ENCODE measurements at regions of chr1 and their contacts with region 1.

Region 1: DNA sequence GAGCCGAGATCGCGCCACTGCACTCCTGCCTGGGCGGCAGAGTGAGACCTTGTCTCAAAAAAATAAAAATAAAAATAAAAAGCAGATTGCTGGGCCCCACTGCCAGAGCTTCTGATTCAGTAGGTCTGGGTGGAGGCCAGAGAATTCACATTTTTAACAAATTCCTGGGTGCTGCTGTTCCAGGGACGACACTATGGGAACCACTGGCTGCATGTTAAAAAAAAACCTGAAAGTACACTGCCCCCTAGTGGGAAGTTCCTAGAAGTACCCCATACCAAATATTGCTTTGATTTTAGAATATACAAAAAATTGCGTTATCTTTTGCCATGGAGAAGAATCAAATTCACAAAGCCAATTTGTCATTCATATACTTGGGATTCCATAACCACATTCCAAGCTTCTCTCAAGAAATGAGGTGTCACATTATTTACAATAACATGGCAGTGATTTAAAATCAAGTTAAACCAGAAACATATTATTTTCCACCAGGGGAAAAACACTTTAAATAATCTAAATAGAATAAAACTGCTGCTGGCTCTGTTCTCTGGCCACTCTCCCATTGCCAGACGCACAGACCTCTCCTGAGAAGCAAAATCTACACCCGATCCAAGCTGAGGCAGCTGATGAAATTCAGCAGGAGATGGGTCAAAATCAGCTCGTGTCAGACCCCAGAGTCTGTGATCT is 27.4 kb downstream of the SYF2 start:
- DNase-seq: no peak
- H3K4me3 ChIP-seq: no peak overlapping the region
- H3K27me3 ChIP-seq: peaks cover 7% of the 10 kb centered on the region
- CTCF ChIP-seq: peak; percentile 70

Region 2: DNA sequence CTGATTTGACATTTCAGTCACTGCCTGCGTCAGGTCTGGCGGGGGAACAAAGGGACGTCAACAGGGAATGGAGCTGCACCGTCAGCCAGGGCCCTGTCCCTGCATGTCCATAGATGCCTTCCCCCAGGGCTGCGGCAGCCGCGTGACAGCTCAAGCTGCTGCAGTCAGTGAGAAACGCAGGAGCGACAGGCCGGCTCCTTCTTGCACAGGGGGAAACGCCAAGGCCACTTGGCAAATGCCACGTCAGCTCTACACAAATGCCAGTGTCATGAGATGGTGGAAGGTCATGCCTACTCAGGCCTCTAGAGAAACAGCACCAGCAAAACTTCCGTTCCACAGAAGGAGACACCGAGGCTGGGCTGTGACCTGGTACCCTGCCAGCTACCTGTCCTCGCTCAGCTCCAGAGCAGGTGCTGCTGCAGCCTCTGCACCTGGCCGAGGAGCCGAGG is 10.3 kb before region 1 on chr1:
- CTCF ChIA-PET with region 1: interaction called, 27 read pairs
- POLR2A ChIA-PET with region 1: no interaction called
- DNase-seq: no peak
- H3K4me3 ChIP-seq: no peak overlapping the region
- H3K27me3 ChIP-seq: peaks cover 17% of the 10 kb centered on the region
- CTCF ChIP-seq: no peak

Region 3: DNA sequence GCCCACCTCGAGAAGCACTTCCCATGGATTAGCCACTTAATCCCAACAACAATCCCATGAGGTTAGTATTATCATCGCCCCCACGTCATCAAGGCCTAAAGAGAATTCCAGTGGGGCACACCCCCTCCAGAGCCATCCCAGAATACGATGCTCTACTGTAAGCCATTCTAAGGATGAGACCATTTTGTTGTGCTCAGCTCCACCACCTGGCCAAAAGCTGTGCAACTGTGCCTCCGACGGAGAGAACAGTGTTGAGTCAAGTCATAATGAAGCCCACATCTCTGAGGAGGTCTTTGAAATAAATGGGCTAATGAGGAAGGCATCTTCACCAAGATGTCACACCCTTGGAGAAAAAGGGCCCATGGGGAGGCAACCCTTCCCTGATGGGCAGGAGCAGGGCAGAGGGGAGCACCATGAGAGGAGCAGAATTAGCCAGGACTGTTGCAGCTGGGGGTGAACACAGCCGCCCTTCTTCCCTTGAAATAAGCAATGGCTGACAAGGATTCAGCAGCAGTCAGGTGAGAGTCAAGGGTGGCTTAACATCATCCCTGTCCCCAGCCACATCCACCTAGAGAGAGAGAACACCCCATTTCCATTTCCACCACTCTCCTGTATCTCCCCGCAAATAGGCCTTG is 12.8 kb after region 1 on chr1:
- CTCF ChIA-PET with region 1: interaction called, 22 read pairs
- POLR2A ChIA-PET with region 1: no interaction called
- DNase-seq: no peak
- H3K4me3 ChIP-seq: no peak overlapping the region
- H3K27me3 ChIP-seq: no peaks in the 10 kb centered on the region
- CTCF ChIP-seq: no peak

Region 4: DNA sequence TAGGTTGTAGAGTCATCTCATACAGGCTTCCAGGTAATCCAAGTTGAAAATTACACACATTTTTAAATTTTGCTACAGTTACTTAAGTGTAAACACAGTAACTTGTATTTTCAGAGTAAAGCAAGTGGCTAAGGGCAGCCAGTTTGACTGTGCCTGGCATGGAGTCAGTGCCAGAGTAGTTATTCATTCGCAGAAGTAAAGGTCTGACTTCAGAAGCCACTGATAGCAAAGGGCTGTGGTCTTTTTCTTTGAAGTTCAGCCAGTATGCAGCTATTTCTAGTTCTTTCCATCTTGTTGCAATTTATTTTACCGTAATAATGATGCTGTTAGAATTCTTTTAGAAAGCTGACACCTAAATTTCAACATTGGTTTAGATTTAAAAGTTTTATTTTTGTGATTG is 142.6 kb after region 1 on chr1:
- CTCF ChIA-PET with region 1: no interaction called
- POLR2A ChIA-PET with region 1: no interaction called
- DNase-seq: no peak
- H3K4me3 ChIP-seq: no peak overlapping the region
- H3K27me3 ChIP-seq: no peaks in the 10 kb centered on the region
- CTCF ChIP-seq: no peak

Measured in BJ (cell line).